HCT116 (cell line): ENCODE measurements at regions of chr12 and their contacts with region 1.

Region 1: GRCh38 chr12:62813031-62813829 is 121.7 kb downstream of the PPM1H start:
- DNase-seq: peak; percentile 45
- ATAC-seq: peak; percentile 92
- H3K4me3 ChIP-seq: 0 out of 4 replicates have a peak overlapping the region, but pooled peaks of 1 of the 2 experiments have one; percentile 9
- H3K27ac ChIP-seq: no peak overlapping the region
- H3K4me1 ChIP-seq: peaks cover 0 to 6% of the 10 kb centered on the region in 2 experiments; a peak in 1 of 4 replicates
- H3K27me3 ChIP-seq: no peaks in the 10 kb centered on the region
- CTCF ChIP-seq: peak; percentile 54 to 82 (median 75); a peak in 5 of 6 replicates
- POLR2A ChIP-seq: no peak
- RAD21 ChIP-seq: peak; percentile 76

Region 2: DNA sequence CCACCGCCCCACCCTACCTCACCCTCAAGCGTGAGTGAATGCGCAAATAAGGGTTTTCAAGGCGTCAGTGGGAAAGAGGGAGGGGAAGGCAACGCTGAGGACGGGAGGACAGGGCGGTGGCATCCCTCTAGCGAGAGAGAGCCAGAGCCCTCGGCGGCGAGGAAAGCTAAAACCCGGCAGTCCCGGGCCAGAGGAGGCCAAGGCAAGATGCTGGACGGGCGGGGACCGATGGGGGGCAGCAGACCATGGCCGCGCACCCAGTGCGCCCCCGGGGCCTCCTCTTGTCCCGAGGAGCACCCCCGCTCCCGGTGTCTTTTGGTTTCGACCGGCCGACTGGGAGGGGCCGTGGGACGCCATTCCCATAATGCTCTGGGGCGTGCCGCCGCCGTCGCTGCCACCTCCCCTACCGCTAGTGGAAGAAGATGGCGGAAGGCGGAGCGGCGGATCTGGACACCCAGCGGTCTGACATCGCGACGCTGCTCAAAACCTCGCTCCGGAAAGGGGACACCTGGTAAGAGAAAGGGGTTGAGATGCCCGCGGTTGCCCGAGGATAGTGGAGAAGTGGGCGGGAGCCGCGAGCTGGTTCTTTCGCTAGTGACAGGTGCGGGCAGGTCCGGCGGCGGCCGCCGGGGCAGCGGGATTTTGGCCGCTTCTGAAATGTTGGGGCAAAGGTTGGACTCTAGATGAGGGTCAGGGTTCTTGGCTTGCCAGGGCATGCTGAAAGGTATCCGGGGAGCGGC is 553.1 kb before region 1 on chr12 and contains the start of gene USP15:
- CTCF ChIA-PET with region 1: no interaction called
- POLR2A ChIA-PET with region 1: no interaction called
- RAD21 ChIA-PET with region 1: no interaction called
- intact Hi-C with region 1: loop called (anchors 10 kb)
- DNase-seq: peak; percentile 94
- ATAC-seq: peak; percentile 92
- H3K4me3 ChIP-seq: peak within 1 kb of the TSS; percentile 56 to 84
- H3K27ac ChIP-seq: peak within 1 kb of the TSS; percentile 74
- H3K4me1 ChIP-seq: peaks cover 3 to 24% of the 10 kb centered on the region in 2 experiments; a peak in 3 of 4 replicates
- H3K27me3 ChIP-seq: no peaks in the 10 kb centered on the region
- CTCF ChIP-seq: peak; percentile 62 to 83 (median 77)
- POLR2A ChIP-seq: peak; percentile 87
- RAD21 ChIP-seq: peak; percentile 41
- total RNA-seq, gene USP15: 49.5 TPM

Region 3: GRCh38 chr12:62435303-62436163 is 377.7 kb before region 1 on chr12:
- CTCF ChIA-PET with region 1: interaction called, 7 read pairs
- POLR2A ChIA-PET with region 1: no interaction called
- RAD21 ChIA-PET with region 1: interaction called in 1 of 2 experiments, 3 read pairs
- intact Hi-C with region 1: loop called (anchors 1 kb)
- DNase-seq: no peak
- ATAC-seq: no peak
- H3K4me3 ChIP-seq: no peak overlapping the region
- H3K27ac ChIP-seq: no peak overlapping the region
- H3K4me1 ChIP-seq: no peaks in the 10 kb centered on the region
- H3K27me3 ChIP-seq: no peaks in the 10 kb centered on the region
- CTCF ChIP-seq: no peak
- POLR2A ChIP-seq: no peak
- RAD21 ChIP-seq: no peak

Region 4: DNA sequence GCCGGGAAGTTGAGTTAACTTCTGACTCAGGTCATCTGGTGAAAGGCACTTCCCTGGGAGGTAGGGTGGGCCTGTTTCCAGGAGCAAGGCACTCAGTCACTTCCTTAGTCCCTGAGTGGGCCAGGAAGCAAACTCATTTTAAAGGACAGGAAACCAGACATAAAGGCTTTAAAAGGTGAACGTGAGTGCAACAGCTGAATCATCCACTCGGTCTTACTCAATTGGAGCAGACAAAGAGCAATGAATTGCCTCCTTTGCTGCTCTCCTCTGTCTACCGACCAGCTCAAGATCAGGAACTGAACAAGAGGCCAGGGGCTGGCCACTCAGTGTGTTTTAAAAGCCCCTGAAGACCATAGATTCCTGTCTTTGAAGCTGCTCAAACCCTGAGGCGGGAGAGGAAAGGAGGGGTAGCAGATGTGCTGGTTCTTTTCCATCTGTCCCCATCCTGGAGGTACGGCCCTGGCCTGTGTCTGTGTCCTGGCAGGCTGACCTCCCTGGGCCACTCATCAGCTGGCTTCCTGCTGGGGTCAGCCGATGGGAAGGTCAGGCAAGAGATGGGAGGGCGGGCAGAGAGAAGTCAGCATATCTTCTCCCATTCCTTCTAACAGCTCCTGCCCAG is 27.2 kb before region 1 on chr12:
- CTCF ChIA-PET with region 1: no interaction called
- POLR2A ChIA-PET with region 1: no interaction called
- RAD21 ChIA-PET with region 1: no interaction called
- intact Hi-C with region 1: no loop called
- DNase-seq: peak; percentile 86
- ATAC-seq: peak; percentile 87
- H3K4me3 ChIP-seq: peak overlapping the region in 1 of 2 experiments; percentile 23; a peak in 2 of 4 replicates
- H3K27ac ChIP-seq: peak overlapping the region; percentile 55
- H3K4me1 ChIP-seq: peaks cover 9 to 35% of the 10 kb centered on the region in 2 experiments
- H3K27me3 ChIP-seq: no peaks in the 10 kb centered on the region
- CTCF ChIP-seq: no peak
- POLR2A ChIP-seq: no peak
- RAD21 ChIP-seq: peak; percentile 45

Region 5: DNA sequence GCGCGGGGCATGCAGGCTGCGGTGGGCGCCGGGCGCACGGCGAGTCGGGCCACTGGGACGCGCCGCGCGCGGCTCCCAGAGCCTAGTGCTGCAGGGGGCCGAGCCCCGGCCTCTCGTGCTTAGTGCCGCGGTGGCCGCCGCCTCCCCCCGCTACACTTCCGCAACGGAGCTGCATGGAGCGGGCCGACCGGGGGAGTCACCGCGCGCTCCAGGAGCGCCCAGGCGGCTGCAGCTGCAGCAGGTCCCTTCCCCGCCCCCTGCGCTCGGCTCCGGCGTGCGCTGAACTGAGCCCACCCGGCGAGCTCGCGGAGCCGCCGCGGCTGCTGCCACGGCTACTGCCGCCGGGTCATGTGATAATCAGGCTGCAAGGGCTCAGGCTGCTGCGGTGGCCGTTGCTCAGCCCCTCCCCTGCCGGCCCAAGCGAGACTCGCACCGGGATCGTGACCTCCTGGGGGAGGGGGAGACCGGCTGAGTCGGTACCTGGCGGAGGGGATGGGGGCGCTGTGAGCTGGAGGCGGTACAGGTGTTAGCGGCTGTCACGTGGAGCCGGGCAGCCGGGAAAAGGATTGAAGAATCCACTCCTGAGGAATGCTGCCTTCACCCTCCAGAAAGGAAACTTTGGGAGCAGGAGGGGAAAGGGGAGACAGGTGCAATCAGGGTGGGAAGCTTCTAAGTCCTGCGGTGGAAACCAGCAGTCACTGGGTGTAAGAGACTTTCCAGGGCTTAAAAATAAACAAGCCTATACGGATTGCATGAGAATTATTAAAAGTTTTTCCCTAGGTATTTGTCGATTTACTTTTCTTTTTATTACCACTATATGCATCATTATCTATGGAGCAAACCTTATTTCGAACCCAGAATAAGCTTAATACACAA is 121.8 kb after region 1 on chr12 and contains the start of gene PPM1H:
- CTCF ChIA-PET with region 1: no interaction called
- POLR2A ChIA-PET with region 1: no interaction called
- RAD21 ChIA-PET with region 1: no interaction called
- intact Hi-C with region 1: loop called (anchors 10 kb)
- DNase-seq: peak; percentile 68
- ATAC-seq: peak; percentile 93
- H3K4me3 ChIP-seq: peak within 1 kb of the TSS; percentile 75 to 85
- H3K27ac ChIP-seq: peak within 1 kb of the TSS; percentile 71
- H3K4me1 ChIP-seq: peaks cover 9 to 18% of the 10 kb centered on the region in 2 experiments; a peak in 3 of 4 replicates
- H3K27me3 ChIP-seq: no peaks in the 10 kb centered on the region
- CTCF ChIP-seq: peak; percentile 48 to 70 (median 69); a peak in 5 of 6 replicates
- POLR2A ChIP-seq: peak; percentile 69
- RAD21 ChIP-seq: peak; percentile 38
- total RNA-seq, gene PPM1H: 8.0 TPM